ENCODE measurements at regions of chr17 and their contacts with region 1.

Region 1: GRCh38 chr17:31663576-31663975 is 195.5 kb downstream of the COPRS start:
- DNase-seq: no peak
- H3K4me3 Mint-ChIP-seq: no peak overlapping the region
- H3K27ac Mint-ChIP-seq: no peak overlapping the region
- H3K4me1 Mint-ChIP-seq: no peaks in the 10 kb centered on the region
- H3K27me3 Mint-ChIP-seq: peaks cover 69% of the 10 kb centered on the region
- CTCF ChIP-seq: no peak

Region 2: DNA sequence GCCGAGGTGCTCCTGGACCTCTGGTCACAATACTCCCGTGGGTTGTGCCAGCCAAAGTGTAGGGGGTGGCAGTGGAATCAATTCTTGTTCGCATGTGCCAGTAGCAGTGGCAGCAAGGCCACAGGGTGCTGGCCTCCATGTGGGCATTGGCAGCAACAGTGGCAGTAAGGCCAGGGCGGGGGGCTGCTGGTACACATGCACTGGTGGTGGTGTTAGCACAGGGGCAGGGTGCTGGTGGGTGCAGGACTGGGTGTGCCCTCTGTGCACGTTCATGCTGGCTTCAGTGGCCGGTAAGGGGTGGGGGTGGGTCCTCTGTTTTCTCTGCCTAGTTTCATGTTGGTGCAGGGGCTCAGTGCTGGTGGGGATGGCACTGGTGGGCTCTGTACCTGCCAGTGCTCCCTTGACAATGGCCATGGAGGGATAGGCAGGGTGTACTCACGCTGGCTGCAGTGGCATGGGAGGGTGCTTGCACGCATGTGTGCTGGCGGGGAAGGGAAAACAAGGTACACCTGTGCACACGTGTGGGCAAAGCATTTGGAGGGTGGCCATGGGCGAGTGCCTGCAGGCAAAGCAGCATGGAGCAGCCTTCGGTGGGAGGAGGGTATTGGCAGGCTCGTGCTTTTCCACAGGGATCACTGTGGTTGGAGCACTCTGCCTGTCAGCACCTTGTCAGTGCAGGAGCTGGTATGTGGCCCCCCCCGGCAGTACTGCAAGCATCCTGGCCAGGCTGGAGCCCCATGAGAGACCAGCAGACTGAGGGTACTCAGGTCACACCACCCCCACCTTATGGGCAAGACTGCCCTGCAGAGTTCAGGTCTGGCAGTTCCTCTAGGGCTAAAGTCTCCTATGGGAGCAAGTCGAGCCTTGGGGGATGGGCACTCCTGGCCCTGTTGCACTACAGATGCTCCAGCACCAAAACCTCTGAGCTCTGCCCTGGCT is 533.0 kb before region 1 on chr17:
- CTCF ChIA-PET with region 1: interaction called, 13 read pairs
- intact Hi-C with region 1: no loop called
- DNase-seq: no peak
- H3K4me3 Mint-ChIP-seq: no peak overlapping the region
- H3K27ac Mint-ChIP-seq: no peak overlapping the region
- H3K4me1 Mint-ChIP-seq: no peaks in the 10 kb centered on the region
- H3K27me3 Mint-ChIP-seq: no peaks in the 10 kb centered on the region
- CTCF ChIP-seq: no peak

Region 3: DNA sequence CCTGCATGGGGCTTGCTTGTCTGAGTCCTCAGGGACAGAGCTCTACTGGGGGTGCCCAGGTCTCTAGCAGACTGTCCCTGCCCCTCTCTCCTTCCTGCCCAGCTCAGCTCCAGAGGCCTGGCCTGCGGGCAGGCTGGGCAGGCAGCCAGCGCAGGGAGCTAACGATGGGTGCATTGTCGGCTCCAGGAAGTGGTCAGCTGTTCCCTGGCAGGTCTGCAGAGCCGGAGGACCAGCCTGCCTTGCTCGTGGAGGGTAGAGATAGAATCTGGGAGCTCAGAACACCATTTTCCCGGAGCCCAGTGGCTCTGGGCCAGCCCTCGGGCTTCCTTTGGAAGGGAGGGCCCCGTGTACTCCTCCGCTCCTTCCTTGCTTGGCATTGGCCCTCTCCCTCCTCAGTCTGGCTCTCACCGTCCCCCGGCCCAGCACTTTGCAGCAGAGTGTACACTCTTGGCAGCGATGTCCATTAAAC is 82.5 kb before region 1 on chr17:
- CTCF ChIA-PET with region 1: no interaction called
- intact Hi-C with region 1: no loop called
- DNase-seq: peak; percentile 87
- H3K4me3 Mint-ChIP-seq: peak overlapping the region; percentile 52
- H3K27ac Mint-ChIP-seq: peak overlapping the region; percentile 70
- H3K4me1 Mint-ChIP-seq: peaks cover 53% of the 10 kb centered on the region
- H3K27me3 Mint-ChIP-seq: no peaks in the 10 kb centered on the region
- CTCF ChIP-seq: no peak

Region 4: DNA sequence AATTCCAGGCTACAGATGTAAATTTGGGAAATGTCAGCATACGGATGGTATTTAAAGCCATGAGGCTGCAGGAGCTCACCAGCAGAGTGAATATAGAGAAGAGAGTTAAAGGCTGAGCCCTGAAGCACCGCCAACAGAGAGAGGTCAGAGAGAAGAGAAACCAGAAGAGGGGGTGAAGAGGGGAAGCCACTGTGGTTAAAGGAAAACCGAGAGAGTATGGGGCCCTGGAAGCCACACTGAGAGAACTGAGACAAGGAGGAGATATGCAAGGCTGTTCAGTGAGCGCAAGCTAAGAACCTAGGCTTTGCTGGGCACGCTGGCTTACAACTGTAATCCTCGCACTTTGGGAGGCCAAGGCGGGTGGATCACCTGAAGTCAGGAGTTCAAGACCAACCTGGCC is 170.9 kb after region 1 on chr17:
- CTCF ChIA-PET with region 1: no interaction called
- intact Hi-C with region 1: no loop called
- DNase-seq: no peak
- H3K4me3 Mint-ChIP-seq: no peak overlapping the region
- H3K27ac Mint-ChIP-seq: no peak overlapping the region
- H3K4me1 Mint-ChIP-seq: no peaks in the 10 kb centered on the region
- H3K27me3 Mint-ChIP-seq: peaks cover 10% of the 10 kb centered on the region
- CTCF ChIP-seq: no peak